Left colon (tissue), 2 donors: ENCODE measurements at regions of chr18 and their contacts with region 1.

Region 1: GRCh38 chr18:75231053-75231406 is 20.4 kb downstream of the TSHZ1 start:
- DNase-seq: no peak
- ATAC-seq: peak; percentile 54

Region 2: GRCh38 chr18:75290737-75291358 is 59.8 kb after region 1 on chr18:
- intact Hi-C with region 1: no loop called
- DNase-seq: no peak
- ATAC-seq: no peak

Region 3: GRCh38 chr18:75478996-75479880 is 248.2 kb after region 1 on chr18:
- intact Hi-C with region 1: no loop called
- DNase-seq: no peak
- ATAC-seq: peak; percentile 75

Region 4: GRCh38 chr18:76349067-76349715 is 1118.2 kb after region 1 on chr18:
- intact Hi-C with region 1: loop called in 1 of 2 experiments (anchors 10 kb)
- DNase-seq: peak in 1 of 2 donors; percentile 67
- ATAC-seq: peak; percentile 65